ENCODE measurements at regions of chr6 and their contacts with region 1.

Region 1: GRCh38 chr6:2988426-2989331 is 11.0 kb upstream of the NQO2 start:
- DNase-seq: peak; percentile 74
- H3K4me3 Mint-ChIP-seq: peak overlapping the region; percentile 92
- H3K27ac Mint-ChIP-seq: peak overlapping the region; percentile 97
- H3K4me1 Mint-ChIP-seq: peaks cover 32% of the 10 kb centered on the region
- H3K27me3 Mint-ChIP-seq: peaks cover 4% of the 10 kb centered on the region

Region 2: DNA sequence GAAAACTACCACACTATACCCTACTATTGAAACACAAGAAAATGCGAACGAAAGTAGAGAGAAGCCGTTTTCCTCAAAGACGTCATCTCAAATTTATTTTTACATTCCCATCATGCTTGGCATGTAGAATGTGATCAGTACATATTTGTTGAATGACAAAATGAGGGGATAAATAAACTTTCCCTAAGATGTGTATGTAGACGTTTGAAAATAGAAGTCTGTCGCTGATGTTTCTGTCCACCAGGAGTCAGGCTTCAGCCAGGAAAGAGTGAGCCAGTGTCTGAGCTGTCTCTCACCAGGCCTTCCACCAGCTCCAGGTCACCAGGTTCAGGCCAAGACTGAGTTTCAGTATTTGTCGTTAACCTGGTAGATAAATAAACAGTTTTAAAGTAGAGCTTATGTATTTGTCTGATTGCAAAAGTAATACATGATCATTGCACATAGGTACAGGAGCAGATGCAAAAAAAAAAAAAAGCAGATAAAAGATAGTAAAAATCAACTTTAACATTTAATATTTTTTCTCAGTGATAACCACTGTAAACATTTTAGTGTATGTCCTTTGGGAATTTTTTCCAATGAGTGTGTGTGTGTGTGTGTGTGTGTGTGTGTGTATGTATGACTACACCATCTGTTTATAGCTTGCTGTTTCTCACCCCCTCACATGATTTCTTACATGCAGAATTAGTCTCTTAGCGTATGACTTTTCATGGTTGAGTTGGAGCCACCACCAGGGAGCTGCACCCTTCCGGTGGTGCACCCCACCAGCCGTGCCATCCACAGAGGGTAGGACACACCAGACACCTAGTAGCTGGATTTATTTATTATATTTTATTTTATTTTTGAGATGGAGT is 197.3 kb before region 1 on chr6:
- intact Hi-C with region 1: loop called (anchors 1 kb)
- DNase-seq: peak; percentile 46
- H3K4me3 Mint-ChIP-seq: peak overlapping the region; percentile 21
- H3K27ac Mint-ChIP-seq: peak overlapping the region; percentile 88
- H3K4me1 Mint-ChIP-seq: peaks cover 40% of the 10 kb centered on the region
- H3K27me3 Mint-ChIP-seq: no peaks in the 10 kb centered on the region

Region 3: DNA sequence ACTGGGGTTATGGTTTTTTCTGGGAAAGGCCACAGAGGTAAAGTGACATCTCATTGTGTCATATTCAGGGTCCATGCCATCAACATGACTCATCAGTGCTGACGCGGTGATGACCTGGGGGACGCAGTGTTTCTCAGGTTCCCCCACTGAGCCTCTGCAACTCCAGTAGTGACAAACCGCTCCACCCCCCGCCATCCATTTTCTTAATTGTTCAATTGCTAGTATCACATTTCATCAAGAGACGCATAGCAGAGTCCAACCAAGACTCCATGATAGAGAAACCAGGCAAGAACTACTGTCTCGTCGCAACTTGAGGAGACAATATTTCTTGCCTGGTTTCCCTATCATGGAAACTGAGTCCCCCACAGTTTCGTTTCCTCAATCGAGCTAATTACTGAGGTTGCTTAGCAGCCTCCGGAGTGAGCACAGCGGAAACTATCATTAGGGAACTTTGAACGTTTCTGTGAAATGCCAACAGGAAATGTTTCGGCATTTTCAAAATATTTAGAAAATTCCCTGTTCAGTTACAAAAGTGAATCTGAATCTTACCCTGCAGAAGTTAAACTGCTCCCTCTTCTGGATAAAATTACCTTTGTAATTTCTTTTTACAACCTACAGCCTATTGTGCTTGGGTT is 134.8 kb before region 1 on chr6:
- intact Hi-C with region 1: loop called (anchors 1 kb)
- DNase-seq: no peak
- H3K4me3 Mint-ChIP-seq: peak overlapping the region; percentile 73
- H3K27ac Mint-ChIP-seq: peak overlapping the region; percentile 99
- H3K4me1 Mint-ChIP-seq: peaks cover 75% of the 10 kb centered on the region
- H3K27me3 Mint-ChIP-seq: no peaks in the 10 kb centered on the region

Region 4: GRCh38 chr6:2940010-2940850 is 48.4 kb before region 1 on chr6:
- intact Hi-C with region 1: loop called (anchors 1 kb)
- DNase-seq: peak; percentile 78
- H3K4me3 Mint-ChIP-seq: peak overlapping the region; percentile 48
- H3K27ac Mint-ChIP-seq: peak overlapping the region; percentile 89
- H3K4me1 Mint-ChIP-seq: peaks cover 55% of the 10 kb centered on the region
- H3K27me3 Mint-ChIP-seq: peaks cover 13% of the 10 kb centered on the region

Region 5: DNA sequence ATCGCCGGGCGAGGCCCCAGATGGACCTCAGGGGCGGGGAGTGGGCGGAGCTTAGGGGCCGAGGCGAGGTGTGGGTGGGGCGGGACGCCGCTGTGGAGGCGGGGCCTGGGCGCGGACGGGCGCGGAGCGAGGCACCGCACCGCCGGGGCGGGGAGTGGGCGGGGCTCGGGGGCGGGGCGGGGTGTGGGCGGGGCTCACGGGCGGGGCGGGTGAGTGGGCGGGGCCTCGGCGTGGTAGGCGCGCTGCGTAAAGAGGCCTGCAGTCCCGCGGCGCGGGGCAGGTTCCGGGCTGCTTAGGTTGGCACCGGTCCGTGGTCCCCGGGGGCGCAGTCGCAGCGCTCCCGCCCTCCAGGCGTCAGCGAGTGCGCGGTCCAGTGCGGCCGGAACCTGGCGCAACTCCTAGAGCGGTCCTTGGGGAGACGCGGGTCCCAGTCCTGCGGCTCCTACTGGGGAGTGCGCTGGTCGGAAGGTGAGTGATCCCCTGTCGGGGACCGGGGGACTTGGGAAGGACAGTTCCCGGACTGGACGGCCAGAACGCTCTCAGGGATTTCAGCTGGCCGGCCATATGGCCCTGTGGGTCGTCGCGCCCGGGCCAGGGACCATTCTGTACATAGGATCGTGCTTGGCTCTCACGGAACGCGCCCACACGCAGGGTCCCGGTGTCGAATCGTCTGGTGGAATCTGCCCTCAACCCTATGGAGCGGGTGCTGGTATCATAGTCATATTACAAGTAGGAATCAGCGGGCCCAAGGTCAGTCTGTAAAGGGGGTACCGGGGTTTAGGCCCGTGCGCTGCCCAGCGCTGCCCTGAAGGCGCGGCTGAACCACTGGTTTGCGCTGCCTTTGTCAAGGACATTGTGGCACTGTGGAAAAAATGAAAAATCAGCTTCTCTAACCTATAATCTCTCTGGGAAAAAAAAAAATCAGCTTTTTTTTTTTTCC is 11.2 kb after region 1 on chr6 and contains the start of gene NQO2:
- intact Hi-C with region 1: loop called (anchors 1 kb)
- DNase-seq: peak; percentile 83
- H3K4me3 Mint-ChIP-seq: peak within 1 kb of the TSS; percentile 90
- H3K27ac Mint-ChIP-seq: peak within 1 kb of the TSS; percentile 90
- H3K4me1 Mint-ChIP-seq: peaks cover 38% of the 10 kb centered on the region
- H3K27me3 Mint-ChIP-seq: peaks cover 3% of the 10 kb centered on the region
- total RNA-seq, gene NQO2: 30.2 and 34.8 TPM in 2 replicates

Region 6: GRCh38 chr6:3258720-3259490 is 270.2 kb after region 1 on chr6 and contains the start of gene PSMG4:
- intact Hi-C with region 1: loop called (anchors 2 kb)
- DNase-seq: peak; percentile 91
- H3K4me3 Mint-ChIP-seq: peak within 1 kb of the TSS; percentile 99
- H3K27ac Mint-ChIP-seq: peak within 1 kb of the TSS; percentile 95
- H3K4me1 Mint-ChIP-seq: peaks cover 39% of the 10 kb centered on the region
- H3K27me3 Mint-ChIP-seq: peaks cover 11% of the 10 kb centered on the region
- total RNA-seq, gene PSMG4: 32.1 and 35.4 TPM in 2 replicates